ENCODE measurements at regions of chr12 and their contacts with region 1.

Region 1: GRCh38 chr12:110888256-110888991 is 32.0 kb downstream of the MYL2 start:
- DNase-seq: no peak
- ATAC-seq: no peak
- H3K4me3 Mint-ChIP-seq: peak overlapping the region; percentile 92
- H3K27ac Mint-ChIP-seq: peak overlapping the region; percentile 84
- H3K4me1 Mint-ChIP-seq: peaks cover 4% of the 10 kb centered on the region
- H3K27me3 Mint-ChIP-seq: no peaks in the 10 kb centered on the region
- CTCF ChIP-seq: no peak

Region 2: GRCh38 chr12:110508071-110508586 is 380.3 kb before region 1 on chr12:
- CTCF ChIA-PET with region 1: interaction called, 3 read pairs
- POLR2A ChIA-PET with region 1: no interaction called
- intact Hi-C with region 1: loop called (anchors 1 kb)
- DNase-seq: no peak
- ATAC-seq: no peak
- H3K4me3 Mint-ChIP-seq: no peak overlapping the region
- H3K27ac Mint-ChIP-seq: no peak overlapping the region
- H3K4me1 Mint-ChIP-seq: peaks cover 2% of the 10 kb centered on the region
- H3K27me3 Mint-ChIP-seq: no peaks in the 10 kb centered on the region
- CTCF ChIP-seq: no peak